CD4-positive, alpha-beta memory T cell (primary cell): ENCODE measurements at regions of chr11 and their contacts with region 1.

Region 1: GRCh38 chr11:76207642-76208401 is 1.5 kb upstream of the WNT11 start:
- DNase-seq: peak; percentile 63 to 82 (median 76)
- H3K4me3 ChIP-seq: peak overlapping the region; percentile 63 to 72
- H3K4me3 Mint-ChIP-seq: peak overlapping the region; percentile 82 to 89 (median 86)
- H3K27ac ChIP-seq: no peak overlapping the region
- H3K27ac Mint-ChIP-seq: peak overlapping the region in 4 of 7 donors; percentile 22 to 60 (median 50)
- H3K4me1 ChIP-seq: peaks cover 35% of the 10 kb centered on the region
- H3K4me1 Mint-ChIP-seq: peaks cover 8 to 33% (median 17%) of the 10 kb centered on the region in 4 donors
- H3K27me3 ChIP-seq: peaks cover 22% of the 10 kb centered on the region
- H3K27me3 Mint-ChIP-seq: peaks cover 28 to 38% of the 10 kb centered on the region in 2 donors

Region 2: GRCh38 chr11:75896843-75897419 is 310.9 kb before region 1 on chr11:
- CTCF ChIA-PET with region 1: interaction called, 32 read pairs
- POLR2A ChIA-PET with region 1: no interaction called
- intact Hi-C with region 1: loop called (anchors 2 kb)
- DNase-seq: peak in 4 of 5 donors; percentile 22 to 42 (median 30)
- H3K4me3 ChIP-seq: no peak overlapping the region
- H3K4me3 Mint-ChIP-seq: no peak overlapping the region
- H3K27ac ChIP-seq: no peak overlapping the region
- H3K27ac Mint-ChIP-seq: no peak overlapping the region
- H3K4me1 ChIP-seq: no peaks in the 10 kb centered on the region
- H3K4me1 Mint-ChIP-seq: peaks cover 0 to 4% (median 3%) of the 10 kb centered on the region in 4 donors
- H3K27me3 ChIP-seq: no peaks in the 10 kb centered on the region
- H3K27me3 Mint-ChIP-seq: no peaks in the 10 kb centered on the region

Region 3: DNA sequence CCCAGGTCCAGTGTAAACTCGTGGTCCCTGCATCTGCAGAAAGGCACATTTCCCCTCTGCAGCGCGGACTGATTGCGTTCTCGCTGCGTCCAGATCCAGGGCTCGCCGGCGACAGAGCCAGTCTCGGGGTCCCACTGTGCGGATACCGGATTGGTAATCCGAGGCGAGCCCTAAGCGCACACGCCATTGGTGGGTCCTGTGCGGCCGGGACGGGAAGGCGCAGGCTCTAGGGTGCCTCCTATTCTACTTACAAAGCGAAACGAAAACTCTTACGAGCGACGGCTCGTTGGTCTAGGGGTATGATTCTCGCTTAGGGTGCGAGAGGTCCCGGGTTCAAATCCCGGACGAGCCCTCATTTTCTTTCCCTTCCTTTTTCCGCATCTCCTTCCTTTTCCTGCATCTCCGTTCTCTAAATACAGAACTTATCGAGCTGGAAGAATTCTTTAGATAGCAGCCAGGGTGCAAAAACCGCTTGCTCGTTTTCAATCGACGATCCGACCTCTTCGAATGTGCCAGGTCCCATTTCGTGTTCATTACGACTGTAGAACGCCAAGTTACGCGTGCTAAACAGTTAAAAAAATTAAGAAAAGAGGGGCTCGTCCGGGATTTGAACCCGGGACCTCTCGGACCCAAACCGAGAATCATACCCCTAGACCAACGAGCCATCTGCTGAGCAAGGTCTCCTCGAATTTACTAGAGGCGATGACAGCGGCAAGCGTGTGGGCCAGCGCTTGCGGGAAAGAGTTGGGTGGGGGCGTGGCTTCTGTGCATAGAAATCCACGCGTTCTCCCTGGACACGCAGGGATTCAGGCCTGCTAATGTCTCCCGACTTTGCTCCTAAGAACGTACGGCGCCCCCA is 27.6 kb after region 1 on chr11:
- CTCF ChIA-PET with region 1: interaction called, 45 read pairs
- POLR2A ChIA-PET with region 1: interaction called, 48 read pairs
- intact Hi-C with region 1: loop called (anchors 1 kb)
- DNase-seq: peak; percentile 89 to 93 (median 91)
- H3K4me3 ChIP-seq: peak overlapping the region; percentile 87 to 92
- H3K4me3 Mint-ChIP-seq: peak overlapping the region; percentile 92 to 98 (median 96)
- H3K27ac ChIP-seq: peak overlapping the region; percentile 50
- H3K27ac Mint-ChIP-seq: peak overlapping the region; percentile 89 to 100 (median 96)
- H3K4me1 ChIP-seq: peaks cover 42% of the 10 kb centered on the region
- H3K4me1 Mint-ChIP-seq: peaks cover 27 to 59% (median 44%) of the 10 kb centered on the region in 4 donors
- H3K27me3 ChIP-seq: no peaks in the 10 kb centered on the region
- H3K27me3 Mint-ChIP-seq: peaks cover 0 to 9% of the 10 kb centered on the region in 2 donors

Region 4: GRCh38 chr11:76266270-76267090 is 58.7 kb after region 1 on chr11:
- CTCF ChIA-PET with region 1: no interaction called
- POLR2A ChIA-PET with region 1: no interaction called
- intact Hi-C with region 1: no loop called
- DNase-seq: no peak
- H3K4me3 ChIP-seq: no peak overlapping the region
- H3K4me3 Mint-ChIP-seq: peak overlapping the region in 1 of 8 donors; percentile 28
- H3K27ac ChIP-seq: no peak overlapping the region
- H3K27ac Mint-ChIP-seq: no peak overlapping the region
- H3K4me1 ChIP-seq: no peaks in the 10 kb centered on the region
- H3K4me1 Mint-ChIP-seq: no peaks in the 10 kb centered on the region
- H3K27me3 ChIP-seq: no peaks in the 10 kb centered on the region
- H3K27me3 Mint-ChIP-seq: peaks cover 0 to 2% of the 10 kb centered on the region in 2 donors

Region 5: DNA sequence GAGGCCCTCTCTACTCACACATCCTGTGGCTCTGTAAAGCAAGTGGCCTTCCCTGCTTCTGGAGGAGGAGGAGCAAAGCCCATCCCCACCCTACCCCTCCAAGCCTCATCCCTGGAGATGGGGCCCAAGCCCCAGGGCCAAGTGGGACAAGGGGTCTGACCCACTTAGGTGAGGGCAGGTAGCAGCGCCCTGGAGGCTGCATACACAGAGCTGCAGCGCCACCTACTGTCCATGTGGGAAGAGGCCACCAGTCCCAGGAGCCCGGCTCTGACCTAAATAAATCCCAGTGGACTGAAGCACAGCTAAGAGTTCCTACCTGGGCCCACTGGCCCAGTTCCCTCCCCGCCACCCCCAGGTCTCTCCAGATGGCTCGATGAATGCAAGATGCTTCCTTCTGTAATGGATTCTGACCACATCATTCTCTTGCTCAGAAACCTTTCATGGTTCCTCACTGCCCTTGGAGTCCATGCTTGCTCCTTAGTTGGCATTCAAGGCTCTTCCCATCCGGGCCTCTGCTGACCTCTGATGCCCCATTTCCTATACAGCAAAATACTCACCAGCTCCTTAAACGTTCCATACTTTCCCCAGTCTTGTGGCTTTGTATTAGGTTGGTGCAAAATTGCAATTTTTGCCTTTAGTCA is 111.0 kb after region 1 on chr11:
- CTCF ChIA-PET with region 1: interaction called, 288 read pairs
- POLR2A ChIA-PET with region 1: interaction called, 25 read pairs
- intact Hi-C with region 1: loop called (anchors 1 kb)
- DNase-seq: peak; percentile 75 to 80 (median 78)
- H3K4me3 ChIP-seq: no peak overlapping the region
- H3K4me3 Mint-ChIP-seq: no peak overlapping the region
- H3K27ac ChIP-seq: no peak overlapping the region
- H3K27ac Mint-ChIP-seq: peak overlapping the region in 1 of 7 donors; percentile 67
- H3K4me1 ChIP-seq: no peaks in the 10 kb centered on the region
- H3K4me1 Mint-ChIP-seq: peaks cover 0 to 14% (median 6%) of the 10 kb centered on the region in 4 donors
- H3K27me3 ChIP-seq: peaks cover 8% of the 10 kb centered on the region
- H3K27me3 Mint-ChIP-seq: peaks cover 23 to 27% of the 10 kb centered on the region in 2 donors

Region 6: DNA sequence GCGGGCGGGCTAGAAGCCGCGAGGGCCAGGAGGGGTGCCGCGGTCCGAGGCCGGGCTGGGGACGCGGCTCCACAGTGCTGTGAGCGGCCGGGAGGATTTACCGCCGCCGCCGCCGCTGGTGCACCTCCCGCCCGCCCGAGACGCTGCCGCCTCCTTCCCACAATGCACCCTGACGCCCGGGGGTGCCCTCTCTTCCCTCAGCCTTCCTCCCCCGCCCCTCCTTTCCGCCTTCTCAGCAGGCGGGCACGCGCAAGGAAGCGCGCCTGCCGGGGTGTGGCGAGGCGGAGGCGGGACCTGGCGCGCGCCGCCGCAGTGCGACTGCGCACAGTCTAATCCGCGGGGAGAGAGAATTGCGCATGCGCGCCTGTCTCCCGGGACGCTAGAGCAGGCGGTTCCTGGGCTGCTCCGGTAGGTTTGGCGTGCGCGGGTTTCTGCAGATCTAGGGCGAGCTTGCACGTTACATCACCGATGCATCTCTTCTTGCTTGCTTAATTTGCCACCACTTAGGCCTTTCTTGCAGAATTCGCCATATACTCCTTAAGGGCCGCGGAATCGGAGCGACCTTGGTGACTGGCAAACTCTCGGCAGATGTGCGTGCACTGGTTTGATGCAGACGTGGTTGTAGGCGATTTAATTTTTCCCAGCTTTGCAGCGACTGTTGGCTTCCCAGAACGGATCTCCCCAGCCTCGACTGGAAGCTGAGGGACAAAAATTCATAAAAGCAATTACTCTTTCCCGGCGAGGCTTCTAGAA is 173.3 kb after region 1 on chr11 and contains the starts of genes GVQW3 and THAP12:
- CTCF ChIA-PET with region 1: interaction called, 5 read pairs
- POLR2A ChIA-PET with region 1: no interaction called
- intact Hi-C with region 1: loop called (anchors 2 kb)
- DNase-seq: peak; percentile 97 to 99 (median 98)
- H3K4me3 ChIP-seq: peak within 1 kb of the TSS; percentile 82 to 86
- H3K4me3 Mint-ChIP-seq: peak within 1 kb of the TSS; percentile 94 to 99 (median 98)
- H3K27ac ChIP-seq: peak within 1 kb of the TSS; percentile 68
- H3K27ac Mint-ChIP-seq: peak within 1 kb of the TSS; percentile 88 to 96 (median 95)
- H3K4me1 ChIP-seq: peaks cover 56% of the 10 kb centered on the region
- H3K4me1 Mint-ChIP-seq: peaks cover 41 to 68% (median 58%) of the 10 kb centered on the region in 4 donors
- H3K27me3 ChIP-seq: no peaks in the 10 kb centered on the region
- H3K27me3 Mint-ChIP-seq: no peaks in the 10 kb centered on the region
- total RNA-seq, gene GVQW3: 8.7 to 10.1 TPM
- total RNA-seq, gene THAP12: 53.7 to 57.3 TPM

Region 7: DNA sequence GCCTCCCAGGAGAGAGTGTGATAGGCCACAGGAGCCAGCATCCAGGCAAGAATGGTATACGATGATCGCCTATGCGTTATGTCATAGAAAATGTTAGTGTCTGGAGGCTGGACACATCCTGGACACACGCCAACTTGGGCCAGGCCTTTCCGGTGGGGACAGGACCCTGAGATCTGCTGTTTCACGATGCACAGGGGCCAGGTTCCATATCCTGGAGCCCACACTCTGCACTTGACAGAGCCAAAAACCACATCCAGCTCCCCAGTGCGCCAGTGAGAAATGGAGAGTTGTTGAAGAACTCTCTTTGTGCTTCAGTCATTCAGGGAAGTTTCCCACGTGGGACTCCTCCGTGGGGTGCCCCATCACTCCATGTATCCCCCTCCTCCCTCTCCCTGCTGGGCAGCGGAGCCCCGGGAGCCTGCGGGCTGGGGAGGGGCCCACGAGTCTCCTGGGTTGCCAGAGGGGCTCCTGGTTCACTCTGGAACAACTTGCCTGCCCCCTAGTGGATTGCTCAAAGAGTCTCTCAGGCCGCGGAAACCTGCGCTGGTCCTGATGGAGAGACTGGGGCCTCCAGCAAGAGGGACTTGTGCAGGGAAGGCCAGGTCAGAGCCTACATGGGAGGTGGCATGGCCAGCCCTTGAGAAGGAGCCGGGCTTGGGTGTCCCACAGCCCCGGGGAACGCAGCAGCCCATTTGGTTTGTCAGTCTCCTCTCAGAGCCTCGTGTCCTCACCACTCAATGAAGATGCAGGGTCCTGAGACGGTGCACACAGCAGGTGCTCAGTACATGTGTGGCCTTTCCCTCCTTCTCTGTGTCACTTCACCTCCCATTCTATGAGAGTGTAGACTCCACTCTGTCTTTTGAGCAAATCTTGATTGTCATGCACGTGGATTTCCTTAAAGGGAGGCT is 472.9 kb after region 1 on chr11:
- CTCF ChIA-PET with region 1: no interaction called
- POLR2A ChIA-PET with region 1: no interaction called
- intact Hi-C with region 1: loop called (anchors 1 kb)
- DNase-seq: peak; percentile 35 to 54 (median 47)
- H3K4me3 ChIP-seq: no peak overlapping the region
- H3K4me3 Mint-ChIP-seq: no peak overlapping the region
- H3K27ac ChIP-seq: no peak overlapping the region
- H3K27ac Mint-ChIP-seq: no peak overlapping the region
- H3K4me1 ChIP-seq: no peaks in the 10 kb centered on the region
- H3K4me1 Mint-ChIP-seq: no peaks in the 10 kb centered on the region
- H3K27me3 ChIP-seq: no peaks in the 10 kb centered on the region
- H3K27me3 Mint-ChIP-seq: peaks cover 5 to 6% of the 10 kb centered on the region in 2 donors